Spleen (tissue), 13 donors: ENCODE measurements at regions of chr2 and their contacts with region 1.

Region 1: DNA sequence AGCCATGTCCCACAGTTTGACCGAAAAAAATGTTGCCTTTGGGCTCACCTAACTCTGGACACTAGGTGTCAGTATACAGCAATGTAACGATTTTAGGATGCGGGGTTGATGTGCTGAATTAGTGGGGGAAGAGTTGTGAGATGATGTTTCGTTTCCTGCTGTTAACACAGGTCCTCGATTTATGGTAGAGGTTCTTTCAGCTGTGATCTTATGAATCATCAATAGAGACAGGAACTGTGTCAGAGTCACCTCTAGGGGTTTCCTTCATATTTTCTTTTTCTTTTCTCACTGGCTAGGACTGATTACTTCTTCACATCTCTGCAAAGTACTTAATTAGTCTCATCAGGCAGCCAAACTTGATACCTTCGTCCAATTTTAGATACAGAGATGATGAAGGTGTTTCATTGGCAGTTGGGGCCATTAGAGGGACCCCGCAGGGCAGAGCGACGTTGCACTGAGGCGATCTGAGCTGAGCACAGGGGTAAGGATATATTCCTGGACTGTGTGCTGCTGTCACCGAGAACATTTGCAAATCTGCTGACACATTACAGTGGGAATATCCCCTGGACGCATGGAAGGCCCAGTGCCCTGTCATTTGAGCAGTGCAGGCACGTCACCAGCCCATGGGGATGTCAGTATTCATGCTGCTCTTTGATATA is 10.2 kb upstream of the MMADHC start:
- DNase-seq: no peak
- H3K4me3 ChIP-seq: peak overlapping the region in 1 of 8 donors; percentile 4
- H3K27ac ChIP-seq: peak overlapping the region in 2 of 8 donors; percentile 7 to 27
- H3K4me1 ChIP-seq: peaks cover 4 to 11% (median 9%) of the 10 kb centered on the region in 6 donors
- H3K27me3 ChIP-seq: no peaks in the 10 kb centered on the region
- CTCF ChIP-seq: peak; percentile 57 to 86 (median 79)
- POLR2A ChIP-seq: no peak

Region 2: DNA sequence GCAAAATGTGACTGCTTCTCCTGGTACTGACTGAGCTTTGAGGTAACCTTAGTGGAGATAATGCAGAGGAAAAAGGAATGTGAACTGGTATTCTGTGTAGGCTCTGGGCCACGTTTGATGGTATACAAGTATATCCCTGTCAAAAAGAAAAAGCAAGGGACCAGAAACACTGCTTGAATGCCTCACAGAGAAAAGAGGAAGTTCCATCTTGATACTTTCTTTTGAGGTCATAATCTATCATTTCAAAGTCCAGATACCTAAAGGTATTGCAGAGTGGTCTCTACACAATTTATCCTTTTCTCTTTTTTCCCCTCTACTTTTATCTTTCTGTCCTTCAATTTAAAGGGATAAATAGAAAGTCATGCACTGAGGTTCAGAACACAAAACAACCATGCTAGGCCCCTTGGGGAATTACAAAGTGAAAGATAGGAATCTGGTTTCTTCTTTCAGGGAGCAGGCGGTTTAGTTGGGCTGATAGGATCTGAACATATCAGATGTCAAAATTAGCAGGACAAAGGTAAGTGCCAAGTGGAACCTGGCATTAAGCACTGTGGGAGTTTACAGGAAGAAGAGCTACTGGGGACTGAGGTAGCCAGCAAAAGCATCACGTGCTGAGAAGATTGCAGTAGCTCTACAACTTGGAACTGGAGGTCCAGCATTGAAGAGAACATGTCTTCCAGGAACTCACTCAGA is 146.2 kb before region 1 on chr2:
- intact Hi-C with region 1: no loop called
- DNase-seq: no peak
- H3K4me3 ChIP-seq: no peak overlapping the region
- H3K27ac ChIP-seq: no peak overlapping the region
- H3K4me1 ChIP-seq: no peaks in the 10 kb centered on the region
- H3K27me3 ChIP-seq: no peaks in the 10 kb centered on the region
- CTCF ChIP-seq: no peak
- POLR2A ChIP-seq: no peak

Region 3: DNA sequence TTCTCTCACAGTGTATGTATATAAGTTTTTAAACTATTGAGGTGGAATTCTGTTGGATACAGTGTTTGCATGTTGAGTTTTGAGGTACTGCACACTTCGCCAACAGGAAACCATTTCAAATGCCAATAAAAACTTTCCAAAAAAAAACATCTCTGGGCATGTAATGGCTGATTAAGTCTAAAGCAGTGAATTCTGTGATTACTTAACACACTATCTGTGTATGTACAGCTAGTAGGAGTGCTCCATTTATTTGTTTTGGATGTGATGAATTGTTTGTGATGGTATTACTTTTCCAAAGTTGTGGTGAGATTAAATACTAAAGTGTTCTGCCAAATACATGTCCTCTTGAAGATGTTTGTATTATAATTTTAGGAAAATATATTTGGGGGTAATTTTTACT is 41.3 kb before region 1 on chr2:
- intact Hi-C with region 1: no loop called
- DNase-seq: no peak
- H3K4me3 ChIP-seq: no peak overlapping the region
- H3K27ac ChIP-seq: no peak overlapping the region
- H3K4me1 ChIP-seq: peaks cover 0 to 6% (median 2%) of the 10 kb centered on the region in 6 donors
- H3K27me3 ChIP-seq: no peaks in the 10 kb centered on the region
- CTCF ChIP-seq: no peak
- POLR2A ChIP-seq: no peak

Region 4: GRCh38 chr2:150487537-150488429 is 890.0 kb after region 1 on chr2 and contains the start of gene RND3:
- intact Hi-C with region 1: loop called (anchors 5 kb)
- DNase-seq: peak; percentile 84
- H3K4me3 ChIP-seq: peak within 1 kb of the TSS; percentile 34 to 70 (median 44)
- H3K27ac ChIP-seq: peak within 1 kb of the TSS; percentile 51 to 83 (median 79)
- H3K4me1 ChIP-seq: peaks cover 0 to 28% (median 19%) of the 10 kb centered on the region in 6 donors
- H3K27me3 ChIP-seq: peaks cover 0 to 60% (median 27%) of the 10 kb centered on the region in 7 donors
- CTCF ChIP-seq: peak in 10 of 11 experiments; percentile 15 to 69 (median 58)
- POLR2A ChIP-seq: peak in 2 of 3 donors; percentile 31 to 84
- total RNA-seq, gene RND3: 54.1 to 97.0 (median 62.2) TPM

Region 5: DNA sequence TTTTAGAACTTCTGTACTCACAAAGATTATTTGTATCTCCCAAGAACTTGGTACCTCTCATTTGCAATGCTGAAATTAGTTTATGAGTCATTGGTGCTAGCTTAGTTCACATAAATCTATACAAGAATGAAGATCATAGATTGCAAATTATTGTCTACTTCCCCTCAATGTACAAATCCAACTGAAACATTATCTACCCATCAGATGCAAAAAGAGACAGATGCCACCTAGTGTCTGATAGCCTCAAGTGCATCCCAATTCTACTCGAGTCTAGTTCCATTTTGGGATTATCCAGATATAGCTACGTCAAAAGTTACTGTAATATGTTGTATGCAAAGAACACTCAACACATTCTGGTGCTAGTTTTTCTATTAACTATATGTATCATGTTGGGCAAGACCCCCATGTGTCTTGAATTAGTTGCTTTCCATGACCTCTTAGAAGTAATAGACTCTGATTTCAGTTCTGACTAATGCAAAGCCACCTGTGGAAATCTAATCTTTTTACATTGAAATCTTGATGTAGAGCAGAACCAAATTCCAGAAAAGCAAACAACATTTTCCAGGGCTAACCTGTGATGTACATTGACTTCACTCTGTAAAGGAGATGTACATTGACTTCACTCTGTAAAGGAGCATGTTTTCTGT is 1453.9 kb after region 1 on chr2:
- intact Hi-C with region 1: loop called (anchors 5 kb)
- DNase-seq: no peak
- H3K4me3 ChIP-seq: no peak overlapping the region
- H3K27ac ChIP-seq: no peak overlapping the region
- H3K4me1 ChIP-seq: peaks cover 0 to 5% (median 0%) of the 10 kb centered on the region in 6 donors
- H3K27me3 ChIP-seq: no peaks in the 10 kb centered on the region
- CTCF ChIP-seq: peak; percentile 38 to 80 (median 72)
- POLR2A ChIP-seq: no peak

Region 6: GRCh38 chr2:151238527-151239487 is 1641.0 kb after region 1 on chr2:
- intact Hi-C with region 1: loop called (anchors 10 kb)
- DNase-seq: no peak
- H3K4me3 ChIP-seq: no peak overlapping the region
- H3K27ac ChIP-seq: no peak overlapping the region
- H3K4me1 ChIP-seq: peaks cover 0 to 9% (median 6%) of the 10 kb centered on the region in 6 donors
- H3K27me3 ChIP-seq: no peaks in the 10 kb centered on the region
- CTCF ChIP-seq: peak; percentile 63 to 83 (median 71)
- POLR2A ChIP-seq: no peak